ENCODE measurements at regions of chr20 and their contacts with region 1.

Region 1: DNA sequence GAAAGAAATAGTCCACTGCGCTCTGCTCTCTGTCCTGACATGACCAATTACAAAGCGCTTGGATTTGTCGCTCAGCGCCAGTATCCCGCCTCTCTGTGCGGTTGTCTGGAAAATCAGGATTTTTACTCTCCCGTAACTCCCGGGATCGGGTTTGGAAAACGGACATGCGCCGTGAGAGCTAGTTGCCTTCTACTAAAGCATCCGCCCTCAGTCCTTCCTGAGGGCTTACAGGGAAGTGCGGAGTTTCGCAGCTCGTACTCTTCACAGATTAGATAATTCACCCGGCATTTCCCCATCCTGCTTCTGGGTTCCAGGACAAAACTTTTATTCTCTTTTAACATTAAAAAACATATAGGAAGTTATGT is 427 bp upstream of the MKKS start:
- DNase-seq: peak; percentile 94 to 95
- ATAC-seq: peak; percentile 87 to 94
- H3K4me3 ChIP-seq: peak overlapping the region; percentile 70 to 87 (median 80)
- H3K27ac ChIP-seq: peak overlapping the region; percentile 93 to 95 (median 93)
- H3K4me1 ChIP-seq: peaks cover 34 to 39% of the 10 kb centered on the region in 2 donors
- H3K27me3 ChIP-seq: no peaks in the 10 kb centered on the region
- CTCF ChIP-seq: no peak
- POLR2A ChIP-seq: peak; percentile 91 to 92

Region 2: DNA sequence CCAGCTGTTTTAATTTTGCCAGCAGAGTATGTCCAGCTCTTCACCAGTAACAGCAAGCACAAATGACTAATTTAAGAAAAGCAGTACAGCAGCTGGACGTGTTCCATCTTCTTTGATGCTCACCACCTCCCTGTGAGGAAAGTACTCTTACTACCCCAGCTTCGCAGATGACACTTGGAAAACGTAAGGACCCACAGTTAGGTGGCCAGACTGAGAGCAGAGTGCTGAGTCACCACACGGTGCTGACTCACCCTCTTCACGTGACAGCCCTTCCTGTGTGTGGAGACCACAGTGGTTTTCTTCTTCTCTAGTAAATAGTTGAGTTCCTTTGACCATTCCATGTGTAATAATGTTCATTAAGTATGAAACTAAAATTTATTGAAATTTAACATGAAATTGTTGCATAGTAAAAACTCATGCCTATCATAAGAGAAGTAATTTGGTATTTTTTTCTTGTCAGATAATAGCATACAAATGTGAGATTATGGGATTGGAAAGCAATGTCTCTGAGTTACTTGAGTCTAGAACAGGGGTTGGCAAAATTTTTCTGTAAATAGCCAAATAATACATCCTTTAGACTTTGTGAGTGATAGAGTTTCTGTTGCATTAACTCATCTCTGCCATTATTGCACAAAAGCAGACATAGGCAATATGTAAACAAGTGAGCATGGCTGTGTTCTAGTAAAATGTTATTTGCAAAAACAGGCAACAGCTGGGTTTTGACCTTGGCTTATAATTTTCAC is 77.2 kb after region 1 on chr20:
- in situ Hi-C with region 1: no loop called
- intact Hi-C with region 1: loop called (anchors 2 kb)
- DNase-seq: peak; percentile 70 to 86
- ATAC-seq: peak; percentile 95 to 98
- H3K4me3 ChIP-seq: peak overlapping the region in 3 of 4 donors; percentile 15 to 39 (median 28)
- H3K27ac ChIP-seq: peak overlapping the region; percentile 49 to 80 (median 72)
- H3K4me1 ChIP-seq: peaks cover 10 to 35% of the 10 kb centered on the region in 2 donors
- H3K27me3 ChIP-seq: no peaks in the 10 kb centered on the region
- CTCF ChIP-seq: no peak
- POLR2A ChIP-seq: no peak

Region 3: DNA sequence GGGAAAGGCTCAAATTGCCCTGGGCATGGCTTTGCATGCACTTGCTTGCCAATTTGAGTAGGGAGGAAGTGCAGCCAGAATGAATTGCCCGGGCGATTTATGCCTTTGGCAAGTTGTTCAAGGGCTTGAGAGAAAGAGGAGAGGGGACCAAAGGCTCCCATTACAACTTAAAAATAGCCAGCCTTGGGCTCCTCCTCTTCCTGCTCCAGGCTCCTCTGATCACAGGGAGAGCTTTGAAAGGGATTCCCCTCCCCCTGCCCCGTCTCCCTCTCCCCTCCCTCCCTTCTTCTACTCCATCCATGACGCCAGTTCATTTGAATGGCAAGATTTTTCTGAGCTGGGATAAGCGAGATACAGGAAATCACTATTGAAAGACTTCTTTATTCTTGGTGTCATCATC is 544.3 kb after region 1 on chr20:
- in situ Hi-C with region 1: no loop called
- intact Hi-C with region 1: loop called (anchors 2 kb)
- DNase-seq: peak; percentile 69 to 87
- ATAC-seq: peak; percentile 89
- H3K4me3 ChIP-seq: peak overlapping the region in 2 of 4 donors; percentile 3 to 26
- H3K27ac ChIP-seq: peak overlapping the region; percentile 78 to 89 (median 87)
- H3K4me1 ChIP-seq: peaks cover 41 to 53% of the 10 kb centered on the region in 2 donors
- H3K27me3 ChIP-seq: no peaks in the 10 kb centered on the region
- CTCF ChIP-seq: no peak
- POLR2A ChIP-seq: no peak

Region 4: DNA sequence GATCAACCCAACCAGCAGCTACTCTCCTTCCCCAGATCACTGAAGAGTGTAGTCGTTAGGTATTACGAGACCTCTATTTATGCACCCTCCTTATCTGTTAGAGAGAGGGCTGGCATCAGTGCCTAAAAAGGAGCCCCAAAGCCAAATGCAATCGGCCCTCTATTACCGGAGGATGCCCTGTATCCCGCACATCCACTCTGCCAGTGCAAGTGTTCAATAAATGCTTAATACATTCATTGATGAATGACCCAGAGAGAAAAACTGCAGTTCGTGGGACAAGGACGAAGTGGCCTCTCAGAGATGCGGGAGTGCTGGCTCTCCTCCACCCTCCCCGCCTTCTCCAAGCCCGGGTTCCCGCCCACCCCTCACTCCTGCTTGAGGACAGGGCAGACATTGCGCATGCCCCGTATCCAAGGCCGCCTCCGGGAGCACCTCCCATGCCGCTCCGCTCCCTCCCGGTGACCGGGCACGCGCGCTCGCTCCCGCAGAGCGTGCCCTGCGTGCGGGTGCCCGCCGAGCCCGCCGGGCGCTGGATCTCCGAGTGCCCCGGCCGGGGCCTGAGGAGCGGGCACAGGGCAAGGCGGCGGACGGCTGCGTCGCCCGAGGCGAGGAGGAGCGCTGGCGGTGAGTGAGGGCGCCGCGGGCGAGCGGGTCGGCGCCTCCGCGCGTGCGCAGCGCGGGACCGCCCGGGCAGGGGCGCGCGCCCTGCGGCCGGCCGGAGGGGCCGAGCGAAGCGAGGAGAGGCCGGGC is 1456.1 kb after region 1 on chr20:
- in situ Hi-C with region 1: loop called in 1 of 4 experiments (anchors 25 kb)
- intact Hi-C with region 1: no loop called
- DNase-seq: peak; percentile 76 to 80
- ATAC-seq: peak; percentile 84 to 89
- H3K4me3 ChIP-seq: peak overlapping the region; percentile 72 to 86 (median 80)
- H3K27ac ChIP-seq: peak overlapping the region; percentile 83 to 95 (median 88)
- H3K4me1 ChIP-seq: peaks cover 36 to 38% of the 10 kb centered on the region in 2 donors
- H3K27me3 ChIP-seq: no peaks in the 10 kb centered on the region
- CTCF ChIP-seq: peak in 2 of 5 experiments; percentile 11 to 23
- POLR2A ChIP-seq: peak; percentile 71

Measured in gastrocnemius medialis (tissue), 4 donors.